Endothelial cell of umbilical vein (primary cell): ENCODE measurements at regions of chr17 and their contacts with region 1.

Region 1: GRCh38 chr17:41722231-41722630 is 10.1 kb downstream of the GAST start:
- DNase-seq: no peak
- H3K4me3 ChIP-seq: no peak overlapping the region
- H3K27ac ChIP-seq: no peak overlapping the region
- H3K4me1 ChIP-seq: no peaks in the 10 kb centered on the region
- H3K27me3 ChIP-seq: peaks cover 0 to 1% of the 10 kb centered on the region in 2 experiments
- CTCF ChIP-seq: no peak
- POLR2A ChIP-seq: no peak

Region 2: DNA sequence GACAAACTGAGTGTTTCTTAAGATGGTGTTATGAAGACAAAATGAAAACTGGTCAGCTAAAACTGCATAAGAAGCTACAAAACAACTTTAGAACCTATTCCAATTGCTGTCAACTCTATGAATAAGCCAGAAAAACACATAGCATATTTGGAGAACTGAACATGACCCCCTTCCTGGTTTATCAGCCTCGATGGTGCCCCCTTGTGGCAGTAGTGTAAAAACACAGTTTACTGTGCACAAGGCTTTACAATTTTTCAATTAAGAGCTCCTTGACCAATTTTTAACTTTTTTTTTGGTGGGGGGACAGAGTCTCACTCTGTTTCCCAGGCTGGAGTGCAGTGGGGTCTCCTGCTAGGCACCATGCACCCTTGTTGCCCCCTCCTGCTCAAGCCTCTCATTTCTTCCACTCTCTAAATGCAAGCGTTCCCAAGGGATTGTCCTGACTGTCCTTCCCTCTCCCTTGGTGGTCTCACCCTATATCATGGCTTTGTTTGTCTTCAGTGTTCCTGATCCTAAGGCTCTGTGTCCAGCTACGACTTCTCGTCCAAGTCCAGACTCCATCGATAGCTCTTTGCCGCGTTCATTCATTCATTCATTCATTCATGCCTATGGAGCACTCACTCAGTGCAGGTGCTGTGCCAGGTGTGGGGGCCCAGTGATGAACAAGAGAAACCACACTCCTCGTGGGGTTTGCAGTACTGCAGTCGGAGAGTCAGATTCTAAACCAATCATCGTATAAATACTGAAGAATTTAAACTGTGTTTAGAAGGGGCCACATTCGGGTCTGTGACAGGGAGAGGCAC is 26.1 kb before region 1 on chr17:
- CTCF ChIA-PET with region 1: interaction called, 14 read pairs
- POLR2A ChIA-PET with region 1: no interaction called
- dilution Hi-C with region 1: no loop called
- intact Hi-C with region 1: no loop called
- DNase-seq: peak; percentile 58
- H3K4me3 ChIP-seq: no peak overlapping the region
- H3K27ac ChIP-seq: no peak overlapping the region
- H3K4me1 ChIP-seq: no peaks in the 10 kb centered on the region
- H3K27me3 ChIP-seq: no peaks in the 10 kb centered on the region
- CTCF ChIP-seq: peak; percentile 72 to 82
- POLR2A ChIP-seq: peak; percentile 28